Head of caudate nucleus (tissue), 42 donors: ENCODE measurements at regions of chr14 and their contacts with region 1.

Region 1: GRCh38 chr14:51219473-51220448 is 20.3 kb upstream of the TMX1 start:
- DNase-seq: peak in 15 of 42 donors; percentile 11 to 68 (median 31)

Region 2: GRCh38 chr14:50954811-50955372 is 264.9 kb before region 1 on chr14:
- intact Hi-C with region 1: loop called (anchors 10 kb)
- DNase-seq: peak in 14 of 42 donors; percentile 25 to 71 (median 55)